ENCODE measurements at regions of chr1 and their contacts with region 1.

Region 1: DNA sequence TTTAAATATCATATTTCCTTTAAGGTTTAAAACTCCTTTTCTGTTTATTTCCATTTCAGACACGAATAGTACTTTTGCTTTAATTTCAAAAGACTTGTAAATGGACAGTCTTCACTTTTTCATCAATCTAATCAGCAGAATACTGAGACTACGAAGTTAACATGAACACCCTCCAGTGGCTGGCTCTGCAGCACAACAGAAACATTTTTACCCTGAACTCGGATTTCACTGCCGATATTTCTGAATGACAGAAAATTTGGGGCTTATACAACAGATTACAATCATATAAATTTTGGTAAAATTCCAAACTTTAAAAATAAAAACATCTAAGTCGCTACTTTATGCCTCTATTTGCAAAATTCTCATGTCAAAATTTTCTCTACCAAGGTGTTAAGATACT is 86.2 kb downstream of the AKT3 start:
- DNase-seq: no peak
- ATAC-seq: no peak
- H3K4me3 ChIP-seq: no peak overlapping the region
- H3K27ac ChIP-seq: no peak overlapping the region
- H3K4me1 ChIP-seq: no peaks in the 10 kb centered on the region
- H3K27me3 ChIP-seq: no peaks in the 10 kb centered on the region

Region 2: DNA sequence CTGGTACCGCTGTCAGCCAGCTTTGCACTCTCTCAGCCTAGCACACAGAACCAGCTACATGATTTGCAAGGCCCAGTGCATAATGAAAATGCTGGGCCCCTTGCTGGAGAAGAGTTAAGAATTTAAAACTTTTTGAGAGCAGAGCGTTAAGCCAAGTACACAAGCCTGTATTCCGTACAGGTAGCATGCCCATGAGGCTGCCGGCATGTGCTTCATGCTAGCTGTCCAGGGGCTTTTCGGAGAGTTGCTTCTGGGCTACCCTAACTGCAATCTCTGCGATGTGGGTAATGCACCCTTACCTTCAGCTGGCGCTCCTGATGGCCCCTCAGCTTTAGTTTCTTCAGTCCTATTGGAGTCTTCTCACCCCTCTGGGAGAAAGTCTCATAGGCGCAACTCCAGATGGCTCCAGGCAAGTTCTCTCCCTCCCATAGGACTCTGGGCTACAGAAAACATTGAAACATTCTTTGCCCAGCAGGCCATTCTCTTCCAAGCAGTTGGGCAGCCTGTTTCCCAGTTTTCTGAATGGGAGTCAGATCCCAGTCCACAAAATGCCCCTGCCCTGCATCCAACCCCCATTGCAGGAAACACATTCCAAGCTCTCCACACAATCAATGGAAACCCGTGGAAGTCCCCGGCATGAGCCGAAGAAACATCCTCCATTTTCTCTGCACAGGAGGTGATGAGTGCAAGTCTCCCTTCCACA is 92.0 kb after region 1 on chr1:
- intact Hi-C with region 1: no loop called
- DNase-seq: no peak
- ATAC-seq: no peak
- H3K4me3 ChIP-seq: no peak overlapping the region
- H3K27ac ChIP-seq: no peak overlapping the region
- H3K4me1 ChIP-seq: no peaks in the 10 kb centered on the region
- H3K27me3 ChIP-seq: no peaks in the 10 kb centered on the region

Region 3: GRCh38 chr1:244047621-244048471 is 284.0 kb after region 1 on chr1:
- intact Hi-C with region 1: loop called in 1 of 4 experiments (anchors 10 kb)
- DNase-seq: peak; percentile 99 to 100 (median 99)
- ATAC-seq: peak; percentile 98 to 99
- H3K4me3 ChIP-seq: peak overlapping the region; percentile 61
- H3K27ac ChIP-seq: peak overlapping the region; percentile 94
- H3K4me1 ChIP-seq: peaks cover 2% of the 10 kb centered on the region
- H3K27me3 ChIP-seq: no peaks in the 10 kb centered on the region

Measured in right cardiac atrium (tissue), 5 donors.